HEK293 (cell line): ENCODE measurements at regions of chr17 and their contacts with region 1.

Region 1: GRCh38 chr17:48024937-48025906 is 12.4 kb downstream of the COPZ2 start:
- H3K4me3 ChIP-seq: peak overlapping the region; percentile 45
- H3K27ac ChIP-seq: no peak overlapping the region
- H3K4me1 ChIP-seq: peaks cover 14% of the 10 kb centered on the region
- CTCF ChIP-seq: peak; percentile 86

Region 2: GRCh38 chr17:47763913-47764582 is 261.2 kb before region 1 on chr17:
- CTCF ChIA-PET with region 1: no interaction called
- POLR2A ChIA-PET with region 1: no interaction called
- H3K4me3 ChIP-seq: no peak overlapping the region
- H3K27ac ChIP-seq: no peak overlapping the region
- H3K4me1 ChIP-seq: no peaks in the 10 kb centered on the region
- CTCF ChIP-seq: no peak

Region 3: GRCh38 chr17:47840740-47841603 is 184.2 kb before region 1 on chr17 and contains the start of gene SCRN2:
- CTCF ChIA-PET with region 1: interaction called, 115 read pairs
- POLR2A ChIA-PET with region 1: no interaction called
- H3K4me3 ChIP-seq: peak within 1 kb of the TSS; percentile 82
- H3K27ac ChIP-seq: peak within 1 kb of the TSS; percentile 24; the same call in 1 of the 2 replicates
- H3K4me1 ChIP-seq: no peaks in the 10 kb centered on the region; the same call in 1 of the 2 replicates
- CTCF ChIP-seq: peak; percentile 97

Region 4: GRCh38 chr17:47970704-47971463 is 54.3 kb before region 1 on chr17 and contains the start of gene CDK5RAP3:
- CTCF ChIA-PET with region 1: interaction called, 10 read pairs
- POLR2A ChIA-PET with region 1: interaction called, 3 read pairs
- H3K4me3 ChIP-seq: peak within 1 kb of the TSS; percentile 87
- H3K27ac ChIP-seq: peak within 1 kb of the TSS; percentile 69; the same call in 1 of the 2 replicates
- H3K4me1 ChIP-seq: peaks cover 7% of the 10 kb centered on the region; the same call in 1 of the 2 replicates
- CTCF ChIP-seq: peak; percentile 99

Region 5: DNA sequence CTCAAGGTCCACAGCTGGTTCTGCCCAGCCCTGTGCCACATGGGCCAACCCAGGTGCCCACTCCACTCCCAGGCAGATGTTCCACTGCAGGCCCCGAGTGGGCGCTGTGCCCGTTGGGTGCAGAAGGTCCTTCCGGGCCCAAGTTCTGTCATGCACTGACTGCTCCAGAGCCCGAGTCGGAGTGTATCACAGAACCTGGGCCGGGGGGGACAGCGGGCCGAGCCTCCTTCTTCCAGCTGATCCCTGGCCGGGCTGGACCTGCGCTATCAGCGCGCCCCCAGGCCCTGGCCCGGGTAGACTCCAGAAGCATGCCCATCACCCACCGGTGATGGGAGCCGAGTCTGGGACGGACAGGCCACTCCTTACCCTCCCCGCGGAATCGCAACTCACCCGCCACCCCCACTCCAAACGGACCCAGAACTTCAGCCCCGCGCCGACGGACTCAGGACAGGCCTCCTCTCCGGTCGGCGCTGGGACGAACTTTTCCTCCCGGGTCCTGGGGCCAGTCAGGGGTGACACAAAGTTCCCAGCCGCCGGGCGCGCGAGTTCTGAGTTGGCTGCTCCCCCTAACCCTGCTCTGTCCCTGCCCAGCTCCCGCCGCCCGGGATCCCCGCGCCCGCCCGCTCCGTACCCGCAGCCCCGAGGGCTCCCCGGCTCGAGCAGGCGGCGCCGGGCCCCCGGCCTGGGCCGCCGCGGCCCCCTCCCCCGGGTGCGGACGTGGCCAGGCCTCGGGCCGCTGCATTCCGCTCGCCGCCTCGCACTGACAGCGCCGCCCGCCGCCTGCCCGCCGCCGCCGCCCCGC is 12.0 kb after region 1 on chr17 and contains the start of gene COPZ2:
- CTCF ChIA-PET with region 1: interaction called, 18 read pairs
- POLR2A ChIA-PET with region 1: interaction called, 3 read pairs
- H3K4me3 ChIP-seq: no peak within 1 kb of the TSS
- H3K27ac ChIP-seq: no peak within 1 kb of the TSS
- H3K4me1 ChIP-seq: no peaks in the 10 kb centered on the region
- CTCF ChIP-seq: no peak

Region 6: GRCh38 chr17:48068491-48068961 is 43.3 kb after region 1 on chr17:
- CTCF ChIA-PET with region 1: interaction called, 197 read pairs
- POLR2A ChIA-PET with region 1: interaction called, 5 read pairs
- H3K4me3 ChIP-seq: no peak overlapping the region
- H3K27ac ChIP-seq: 0 out of 2 replicates have a peak overlapping the region, but pooled peaks have one; percentile 26
- H3K4me1 ChIP-seq: no peaks in the 10 kb centered on the region
- CTCF ChIP-seq: no peak

Region 7: DNA sequence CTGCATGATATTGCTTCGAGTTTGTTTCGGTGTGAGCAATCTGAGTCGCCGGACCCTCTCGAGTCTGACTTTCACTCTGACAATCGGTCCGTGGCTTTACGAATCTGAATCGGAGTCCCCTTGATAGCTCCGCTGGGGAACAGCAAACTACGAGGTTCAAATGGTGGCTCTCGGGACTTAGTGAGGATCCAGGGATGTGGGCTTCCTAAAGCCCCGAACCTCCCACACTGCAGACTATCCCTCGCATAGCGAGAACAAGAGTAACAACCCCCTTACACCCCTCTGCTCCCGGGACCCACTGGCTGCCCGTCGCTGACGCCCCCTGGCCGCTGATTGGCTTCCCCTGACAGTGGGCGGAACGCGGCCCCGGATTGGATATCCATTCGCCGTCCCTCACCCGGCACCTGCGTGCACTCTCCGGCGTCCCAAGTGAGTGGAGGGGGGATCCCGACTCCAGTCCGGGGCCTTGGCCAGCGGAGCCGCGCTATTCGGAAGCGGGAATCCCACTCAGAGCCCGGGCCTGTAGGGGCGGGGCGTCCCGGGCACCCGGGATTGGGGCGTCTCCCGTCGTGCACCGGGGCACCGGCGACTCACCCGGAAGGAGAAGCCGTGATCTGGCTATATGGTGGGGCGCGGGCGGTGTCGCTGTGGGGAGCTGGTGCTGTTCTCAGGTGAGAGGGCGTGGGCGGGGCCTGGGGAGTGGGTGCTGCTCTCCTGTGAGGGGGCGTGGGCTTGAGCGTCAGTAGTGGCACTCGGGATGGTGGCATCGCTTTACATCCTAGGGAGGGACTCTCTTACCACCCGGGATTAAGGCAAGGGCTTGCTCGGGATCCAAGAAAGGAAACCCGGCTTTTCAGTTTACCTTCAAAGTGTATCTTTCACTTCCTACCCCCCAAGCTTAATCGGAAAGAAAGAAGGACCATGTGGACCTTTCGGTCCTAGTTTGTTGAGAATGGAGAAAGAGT is 82.2 kb after region 1 on chr17 and contains the start of gene SNX11:
- CTCF ChIA-PET with region 1: interaction called, 12 read pairs
- POLR2A ChIA-PET with region 1: interaction called, 3 read pairs
- H3K4me3 ChIP-seq: peak within 1 kb of the TSS; percentile 81
- H3K27ac ChIP-seq: peak within 1 kb of the TSS; percentile 87
- H3K4me1 ChIP-seq: peaks cover 8% of the 10 kb centered on the region
- CTCF ChIP-seq: peak; percentile 76; the same call in 1 of the 2 replicates

Region 8: DNA sequence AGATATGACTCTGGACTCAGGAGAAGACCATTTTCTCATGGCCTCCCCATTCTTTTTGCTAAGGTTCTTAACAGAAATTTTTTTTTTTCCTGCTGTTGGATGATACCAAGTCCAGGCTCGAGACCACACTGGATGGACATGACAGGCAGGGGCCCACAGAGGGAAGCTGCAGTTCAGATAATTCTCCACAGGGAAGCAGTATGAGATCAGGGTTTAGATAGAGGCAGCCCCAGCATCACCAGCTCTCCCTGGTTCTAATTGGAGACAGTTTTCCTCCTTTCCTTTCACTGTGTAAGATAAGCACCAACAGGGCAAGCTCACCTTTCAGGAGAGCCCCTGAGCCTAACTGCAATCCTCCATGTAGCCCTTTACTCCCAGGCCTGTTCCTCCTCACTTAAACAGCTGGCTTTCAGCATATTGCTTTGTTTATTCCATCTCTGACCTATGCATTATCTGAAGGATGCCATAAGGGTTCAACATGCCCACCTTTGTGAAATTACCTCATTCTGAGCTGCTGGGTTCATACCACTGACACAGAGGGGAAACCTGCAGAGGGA is 190.4 kb after region 1 on chr17:
- CTCF ChIA-PET with region 1: interaction called, 10 read pairs
- POLR2A ChIA-PET with region 1: interaction called, 3 read pairs
- H3K4me3 ChIP-seq: no peak overlapping the region
- H3K27ac ChIP-seq: no peak overlapping the region
- H3K4me1 ChIP-seq: peaks cover 6% of the 10 kb centered on the region
- CTCF ChIP-seq: peak; percentile 75